ENCODE measurements at regions of chr14 and their contacts with region 1.

Region 1: GRCh38 chr14:22497144-22497423 is 91.9 kb downstream of the DAD1 start:
- DNase-seq: no peak
- ATAC-seq: peak; percentile 13
- H3K4me3 ChIP-seq: no peak overlapping the region
- H3K4me3 Mint-ChIP-seq: peak overlapping the region; percentile 54
- H3K27ac ChIP-seq: no peak overlapping the region
- H3K27ac Mint-ChIP-seq: peak overlapping the region; percentile 89
- H3K4me1 ChIP-seq: peaks cover 17 to 48% of the 10 kb centered on the region in 2 donors
- H3K4me1 Mint-ChIP-seq: peaks cover 68% of the 10 kb centered on the region
- H3K27me3 ChIP-seq: no peaks in the 10 kb centered on the region
- H3K27me3 Mint-ChIP-seq: no peaks in the 10 kb centered on the region
- CTCF ChIP-seq: no peak

Region 2: DNA sequence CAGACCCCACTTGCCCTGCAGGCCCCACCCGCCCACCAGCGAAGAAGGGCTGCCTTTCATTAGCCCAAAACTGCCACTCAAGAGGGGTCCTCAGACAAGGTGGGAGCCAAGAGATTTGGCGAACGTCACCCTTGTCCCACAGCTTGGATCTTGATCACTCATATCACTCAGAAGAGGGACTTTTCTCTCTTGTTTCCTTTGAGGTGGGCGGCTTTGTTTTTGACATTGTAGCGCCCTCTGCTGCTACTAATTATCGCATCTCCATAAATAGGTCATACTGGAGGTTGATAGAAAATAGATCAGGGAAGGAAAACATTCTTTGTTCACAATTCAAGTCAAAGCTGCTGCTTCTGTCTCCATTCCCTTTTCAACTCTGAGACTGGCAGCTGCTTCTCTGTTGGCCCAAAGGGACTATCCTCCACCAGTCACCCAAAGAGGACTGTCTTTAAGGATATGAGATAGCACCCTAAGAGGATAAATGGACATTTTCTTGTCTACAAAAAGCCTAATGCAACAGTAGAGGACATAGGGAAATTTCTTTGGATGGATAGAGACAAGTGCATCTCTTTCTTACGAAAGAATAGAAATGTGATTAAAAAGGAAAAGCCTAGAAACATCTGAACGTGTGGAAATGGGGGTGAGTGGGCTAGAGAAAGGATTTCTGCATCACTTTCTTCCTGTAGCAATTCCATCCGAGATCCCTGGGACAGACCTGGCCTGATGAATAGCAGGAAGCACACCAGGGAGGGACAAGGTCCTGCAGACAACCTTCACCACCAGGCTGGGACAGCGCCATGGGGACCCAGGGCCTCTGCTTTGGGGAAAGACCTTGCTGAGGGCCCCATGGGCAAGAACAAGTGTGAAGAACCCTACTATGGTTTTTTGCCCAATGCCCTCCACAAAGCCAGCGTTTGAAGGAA is 23.9 kb before region 1 on chr14:
- CTCF ChIA-PET with region 1: interaction called, 17 read pairs
- POLR2A ChIA-PET with region 1: interaction called, 3 read pairs
- intact Hi-C with region 1: no loop called
- DNase-seq: peak; percentile 82
- ATAC-seq: peak; percentile 56
- H3K4me3 ChIP-seq: no peak overlapping the region
- H3K4me3 Mint-ChIP-seq: no peak overlapping the region
- H3K27ac ChIP-seq: no peak overlapping the region
- H3K27ac Mint-ChIP-seq: peak overlapping the region; percentile 75
- H3K4me1 ChIP-seq: peaks cover 60 to 74% of the 10 kb centered on the region in 2 donors
- H3K4me1 Mint-ChIP-seq: peaks cover 89% of the 10 kb centered on the region
- H3K27me3 ChIP-seq: no peaks in the 10 kb centered on the region
- H3K27me3 Mint-ChIP-seq: no peaks in the 10 kb centered on the region
- CTCF ChIP-seq: peak; percentile 77

Region 3: DNA sequence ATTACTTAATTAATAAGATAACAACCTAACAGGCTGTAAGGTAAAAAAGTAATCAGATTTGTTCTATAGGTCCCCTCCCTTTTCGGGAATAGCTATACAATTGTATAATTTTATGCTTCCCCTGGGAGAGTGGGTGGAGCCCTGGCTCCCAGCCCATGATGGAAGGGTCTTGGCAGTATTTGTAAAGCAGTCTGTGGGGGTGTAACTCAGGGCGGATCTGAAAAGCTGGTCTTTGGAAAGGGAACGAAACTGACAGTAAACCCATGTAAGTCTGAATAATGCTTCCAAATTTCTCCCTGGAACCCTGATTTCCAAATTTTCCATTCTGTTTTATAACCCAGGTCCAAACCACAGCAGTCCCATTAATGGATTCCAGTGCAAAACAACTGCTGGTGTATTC is 18.4 kb before region 1 on chr14:
- CTCF ChIA-PET with region 1: interaction called, 17 read pairs
- POLR2A ChIA-PET with region 1: interaction called, 3 read pairs
- intact Hi-C with region 1: loop called (anchors 2 kb)
- DNase-seq: no peak
- ATAC-seq: no peak
- H3K4me3 ChIP-seq: no peak overlapping the region
- H3K4me3 Mint-ChIP-seq: peak overlapping the region; percentile 83
- H3K27ac ChIP-seq: peak overlapping the region; percentile 3 to 51
- H3K27ac Mint-ChIP-seq: peak overlapping the region; percentile 79
- H3K4me1 ChIP-seq: peaks cover 85 to 94% of the 10 kb centered on the region in 2 donors
- H3K4me1 Mint-ChIP-seq: peaks cover 95% of the 10 kb centered on the region
- H3K27me3 ChIP-seq: no peaks in the 10 kb centered on the region
- H3K27me3 Mint-ChIP-seq: no peaks in the 10 kb centered on the region
- CTCF ChIP-seq: no peak

Measured in B cell (primary cell).